ENCODE measurements at regions of chr19 and their contacts with region 1.

Region 1: DNA sequence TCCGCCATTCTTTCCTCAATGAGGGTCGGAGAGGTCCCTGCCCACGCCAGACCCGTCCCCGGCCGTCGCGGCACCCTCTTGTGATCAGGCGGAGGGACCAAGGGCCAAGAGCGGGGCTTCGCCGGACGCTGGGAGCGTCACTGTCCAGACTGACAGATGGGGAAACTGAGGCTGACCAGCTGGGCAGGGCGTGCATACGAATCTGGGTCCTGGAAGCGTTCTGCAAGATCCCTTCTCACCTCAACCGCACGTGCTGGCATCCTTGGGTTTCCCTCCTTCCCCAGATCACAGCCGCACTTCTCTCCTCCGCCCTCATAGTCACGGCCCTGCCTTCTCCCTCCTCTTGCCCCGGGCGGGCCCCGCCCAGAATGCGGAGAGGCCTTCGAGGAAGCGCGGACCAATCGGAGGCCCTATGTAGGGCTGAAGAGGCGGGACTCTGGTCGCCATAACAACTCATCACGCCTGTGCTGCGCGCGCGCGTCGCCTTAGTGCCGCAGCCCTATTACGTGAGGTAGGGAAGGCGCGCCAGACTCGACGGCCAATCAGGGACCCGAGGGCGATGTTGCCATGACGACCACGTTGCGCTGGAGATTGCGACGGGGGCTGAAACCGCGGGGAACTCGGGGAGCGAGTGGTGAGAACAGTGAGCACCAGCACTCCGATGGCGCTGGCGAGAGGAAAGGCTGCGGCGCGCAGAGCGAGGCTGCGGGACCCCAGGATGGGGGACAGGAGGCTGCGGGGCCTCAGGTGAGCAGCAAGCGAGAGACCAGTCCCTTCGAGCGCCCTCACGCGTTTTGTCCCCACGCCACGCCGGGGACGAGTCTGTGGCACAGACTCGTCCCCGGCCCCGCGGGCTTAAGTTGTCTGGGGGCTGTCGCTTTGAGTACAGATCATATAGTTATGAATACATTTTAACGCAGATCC is 5.7 kb downstream of the RNF225 start:
- DNase-seq: peak; percentile 99
- H3K4me3 Mint-ChIP-seq: peak overlapping the region; percentile 86
- H3K27ac Mint-ChIP-seq: peak overlapping the region; percentile 88
- H3K4me1 Mint-ChIP-seq: peaks cover 24% of the 10 kb centered on the region
- H3K27me3 Mint-ChIP-seq: peaks cover 5% of the 10 kb centered on the region

Region 2: GRCh38 chr19:58182989-58183816 is 218.0 kb before region 1 on chr19 and contains the start of gene ZNF274:
- intact Hi-C with region 1: loop called (anchors 1 kb)
- DNase-seq: peak; percentile 90
- H3K4me3 Mint-ChIP-seq: peak within 1 kb of the TSS; percentile 93
- H3K27ac Mint-ChIP-seq: peak within 1 kb of the TSS; percentile 99
- H3K4me1 Mint-ChIP-seq: peaks cover 16% of the 10 kb centered on the region
- H3K27me3 Mint-ChIP-seq: no peaks in the 10 kb centered on the region
- total RNA-seq, gene ZNF274: 18.2 and 21.2 TPM in 2 replicates

Region 3: DNA sequence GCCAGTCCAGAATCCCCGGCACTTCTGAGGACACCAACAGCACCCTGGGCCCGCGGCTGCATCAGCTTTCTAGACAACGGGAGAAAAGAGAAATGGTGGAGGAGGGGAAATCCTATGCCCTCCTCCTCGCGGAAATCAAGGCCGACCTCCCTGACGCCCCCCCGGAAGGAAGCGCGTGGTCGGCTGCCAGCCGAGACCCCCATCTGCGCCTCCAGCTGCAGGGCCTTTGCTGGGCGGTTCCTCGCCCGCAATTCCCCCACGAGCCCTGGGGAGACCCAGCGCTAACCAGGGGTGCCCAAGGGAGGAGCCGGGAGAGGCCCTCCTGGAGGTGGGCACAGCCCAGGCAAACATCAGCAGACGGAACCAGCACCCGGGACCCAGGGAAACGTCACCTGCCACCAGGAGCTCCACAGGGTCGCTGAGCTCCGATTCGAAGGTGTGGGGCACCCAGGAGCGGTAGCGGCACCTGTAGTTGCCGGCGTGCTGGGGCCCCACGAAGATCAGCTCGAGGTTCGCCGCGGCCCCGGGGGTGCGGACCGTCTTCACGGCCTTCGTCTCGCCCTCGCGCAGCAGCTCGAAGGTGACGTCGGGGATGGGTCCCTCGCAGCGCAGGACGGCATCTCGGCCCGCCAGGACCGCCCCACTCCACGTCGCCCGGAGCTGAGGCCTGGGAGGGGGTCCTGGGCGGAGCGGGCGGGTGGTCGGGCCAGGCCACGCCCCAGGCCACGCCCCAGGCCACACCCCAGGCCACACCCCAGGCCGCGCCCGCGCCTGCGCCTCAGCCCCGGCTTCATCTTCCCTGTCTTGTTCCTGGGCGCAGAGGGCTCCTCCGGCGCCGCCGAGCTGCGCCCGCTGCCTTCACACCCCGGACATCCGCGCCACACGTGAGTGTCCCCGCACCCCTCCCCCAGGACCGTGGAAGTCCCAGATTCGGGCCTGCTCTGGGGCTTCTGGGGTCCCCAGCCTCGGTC is 53.9 kb before region 1 on chr19:
- intact Hi-C with region 1: loop called (anchors 1 kb)
- DNase-seq: peak; percentile 63
- H3K4me3 Mint-ChIP-seq: peak overlapping the region; percentile 92
- H3K27ac Mint-ChIP-seq: peak overlapping the region; percentile 83
- H3K4me1 Mint-ChIP-seq: peaks cover 29% of the 10 kb centered on the region
- H3K27me3 Mint-ChIP-seq: no peaks in the 10 kb centered on the region

Region 4: DNA sequence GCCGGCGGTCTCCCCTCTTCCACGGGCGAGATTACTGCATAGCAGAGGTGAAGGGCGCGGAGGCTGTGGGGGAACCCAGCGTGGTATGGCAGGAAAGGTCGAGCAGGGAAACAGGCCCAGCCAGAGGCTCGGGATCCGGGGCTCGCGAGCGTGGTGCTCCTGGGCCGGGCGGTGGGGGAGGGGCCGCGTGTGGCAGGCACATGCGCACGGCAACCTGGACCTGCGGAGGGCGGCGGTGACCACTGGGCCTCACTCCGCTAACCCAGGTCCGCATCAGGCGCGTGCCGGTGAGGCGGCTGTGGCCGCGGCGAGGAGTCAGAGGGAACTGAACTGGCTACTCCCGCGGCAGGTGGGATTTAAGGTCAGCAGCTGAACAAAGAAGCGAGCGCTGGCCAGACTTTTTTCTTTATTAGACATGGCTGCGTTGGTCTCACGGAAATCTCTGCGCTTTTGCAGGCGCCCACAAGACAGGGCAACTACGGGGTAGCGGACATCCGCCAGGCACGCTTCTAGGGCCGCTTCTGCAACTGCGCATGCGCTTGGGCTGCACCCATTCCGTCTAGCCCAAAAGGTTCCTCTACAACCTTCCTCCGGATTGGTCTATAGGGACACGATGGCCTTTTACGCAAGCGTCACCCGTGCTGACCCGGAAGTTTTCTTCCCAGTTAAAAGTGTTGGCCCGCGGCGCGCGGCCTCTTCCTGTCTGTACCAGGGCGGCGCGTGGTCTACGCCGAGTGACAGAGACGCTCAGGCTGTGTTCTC is 14.4 kb before region 1 on chr19 and contains the start of gene RPS5:
- intact Hi-C with region 1: loop called (anchors 1 kb)
- DNase-seq: peak; percentile 95
- H3K4me3 Mint-ChIP-seq: peak within 1 kb of the TSS; percentile 93
- H3K27ac Mint-ChIP-seq: peak within 1 kb of the TSS; percentile 99
- H3K4me1 Mint-ChIP-seq: peaks cover 35% of the 10 kb centered on the region
- H3K27me3 Mint-ChIP-seq: no peaks in the 10 kb centered on the region
- total RNA-seq, gene RPS5: 1,157 and 1,161 TPM in 2 replicates

Region 5: DNA sequence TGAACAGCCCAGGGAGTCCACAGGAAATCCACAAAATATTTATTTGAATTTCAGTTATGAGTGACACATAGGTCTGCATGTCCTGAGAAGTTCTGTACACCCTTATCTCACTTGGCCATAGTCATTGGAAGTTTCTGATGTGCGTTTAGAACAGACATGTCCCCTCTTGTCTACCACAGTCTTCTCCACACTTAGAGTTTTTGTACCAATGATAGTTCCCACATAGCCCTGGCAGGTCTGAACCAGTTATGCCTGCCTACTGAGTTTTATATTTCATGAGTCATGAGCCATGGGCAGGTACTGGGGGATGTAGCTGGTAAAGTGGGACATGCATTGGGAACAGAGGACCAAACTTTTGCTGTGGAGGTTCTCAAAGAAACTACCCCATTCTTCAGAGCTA is 27.4 kb after region 1 on chr19:
- intact Hi-C with region 1: no loop called
- DNase-seq: no peak
- H3K4me3 Mint-ChIP-seq: no peak overlapping the region
- H3K27ac Mint-ChIP-seq: no peak overlapping the region
- H3K4me1 Mint-ChIP-seq: no peaks in the 10 kb centered on the region
- H3K27me3 Mint-ChIP-seq: no peaks in the 10 kb centered on the region

Region 6: DNA sequence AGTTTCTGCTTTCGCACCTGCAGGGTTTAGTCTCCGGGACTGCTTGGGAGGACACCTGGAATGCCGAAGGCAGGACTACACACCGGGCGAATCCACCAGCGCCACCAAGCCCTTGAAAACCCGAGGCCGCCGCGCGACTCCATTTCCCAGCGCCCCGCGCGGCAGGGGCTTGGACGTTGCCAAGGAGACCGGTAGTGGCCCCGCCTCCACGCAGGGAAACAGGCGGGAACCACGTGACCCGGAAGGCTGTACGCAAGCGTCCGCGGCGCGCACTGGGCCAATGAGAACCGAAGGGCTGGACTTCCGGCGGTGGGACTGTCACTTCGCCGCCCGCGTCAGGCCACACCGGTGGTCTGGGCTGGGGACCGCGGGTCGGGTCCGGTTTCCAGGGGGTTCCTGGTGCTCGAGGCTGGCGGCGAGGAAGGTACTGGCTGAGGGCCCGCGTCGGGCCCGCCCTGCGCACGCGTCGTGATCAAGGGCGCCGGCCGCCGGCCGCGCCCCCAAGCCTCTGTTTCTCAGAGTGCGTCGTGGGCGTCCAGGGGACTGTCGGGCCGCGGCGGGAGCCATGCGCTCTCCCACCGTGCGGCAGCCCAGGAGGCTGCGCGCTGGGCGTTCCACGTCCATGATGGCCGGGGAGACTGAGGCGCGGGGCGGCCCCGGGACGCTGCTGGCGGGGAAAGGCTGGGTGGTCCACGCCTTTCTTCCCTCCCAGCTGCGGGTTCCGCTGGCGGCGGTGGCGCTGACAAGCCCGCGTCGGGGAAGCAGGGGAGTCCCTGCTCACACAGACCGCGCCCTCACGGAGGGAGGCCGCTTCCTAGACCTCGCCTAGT is 65.8 kb after region 1 on chr19 and contains the start of gene ZNF324:
- intact Hi-C with region 1: loop called (anchors 1 kb)
- DNase-seq: peak; percentile 96
- H3K4me3 Mint-ChIP-seq: peak within 1 kb of the TSS; percentile 88
- H3K27ac Mint-ChIP-seq: peak within 1 kb of the TSS; percentile 71
- H3K4me1 Mint-ChIP-seq: peaks cover 17% of the 10 kb centered on the region
- H3K27me3 Mint-ChIP-seq: no peaks in the 10 kb centered on the region
- total RNA-seq, gene ZNF324: 12.8 and 15.5 TPM in 2 replicates

Region 7: GRCh38 chr19:58499021-58499927 is 98.1 kb after region 1 on chr19:
- intact Hi-C with region 1: loop called (anchors 1 kb)
- DNase-seq: peak; percentile 96
- H3K4me3 Mint-ChIP-seq: peak overlapping the region; percentile 91
- H3K27ac Mint-ChIP-seq: peak overlapping the region; percentile 91
- H3K4me1 Mint-ChIP-seq: peaks cover 21% of the 10 kb centered on the region
- H3K27me3 Mint-ChIP-seq: peaks cover 7% of the 10 kb centered on the region

Region 8: DNA sequence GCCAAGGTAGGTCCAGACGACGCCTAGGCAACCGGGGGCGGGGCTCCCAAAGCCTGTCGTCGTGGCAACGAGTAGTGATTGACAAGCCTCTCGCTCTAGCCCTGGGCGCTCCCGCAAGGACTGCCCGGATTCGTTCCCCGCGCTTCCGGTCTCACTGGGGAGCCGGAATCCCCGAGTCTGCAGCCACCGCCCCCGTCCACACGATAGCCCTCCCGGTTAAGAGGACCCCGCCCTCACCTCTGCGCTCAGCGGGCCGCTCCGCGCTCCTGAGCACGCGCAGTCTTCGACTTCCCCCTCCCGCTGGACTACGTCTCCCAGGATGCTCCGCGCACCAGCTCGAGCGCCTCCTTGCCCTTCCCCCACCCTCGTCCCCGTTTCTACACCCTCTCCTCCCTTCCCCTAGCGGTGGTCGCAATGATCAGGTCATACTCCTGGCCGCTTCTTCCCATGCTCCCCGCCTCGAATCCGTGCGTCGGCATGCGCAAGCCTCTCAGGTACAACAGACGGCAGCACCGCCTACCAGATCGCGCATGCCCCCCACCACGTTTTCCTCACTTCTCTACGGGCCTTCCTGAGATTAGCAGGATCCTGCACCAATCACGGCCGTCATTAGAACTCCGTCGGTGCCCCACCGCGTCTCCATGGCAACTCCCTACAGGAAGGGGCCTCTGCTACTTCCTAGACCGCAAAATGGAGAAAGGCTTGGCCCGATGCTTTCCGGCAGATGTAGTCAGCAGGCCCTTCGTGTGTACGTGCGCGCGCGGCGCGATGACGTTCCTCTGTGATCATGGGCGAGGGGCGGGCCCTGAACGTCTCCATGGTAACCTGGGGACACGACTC is 171.9 kb after region 1 on chr19 and contains the start of gene MZF1:
- intact Hi-C with region 1: loop called (anchors 1 kb)
- DNase-seq: peak; percentile 100
- H3K4me3 Mint-ChIP-seq: peak within 1 kb of the TSS; percentile 95
- H3K27ac Mint-ChIP-seq: peak within 1 kb of the TSS; percentile 99
- H3K4me1 Mint-ChIP-seq: peaks cover 41% of the 10 kb centered on the region
- H3K27me3 Mint-ChIP-seq: no peaks in the 10 kb centered on the region
- total RNA-seq, gene MZF1: 19.6 and 21.6 TPM in 2 replicates